A673 (cell line): ENCODE measurements at regions of chr2 and their contacts with region 1.

Region 1: DNA sequence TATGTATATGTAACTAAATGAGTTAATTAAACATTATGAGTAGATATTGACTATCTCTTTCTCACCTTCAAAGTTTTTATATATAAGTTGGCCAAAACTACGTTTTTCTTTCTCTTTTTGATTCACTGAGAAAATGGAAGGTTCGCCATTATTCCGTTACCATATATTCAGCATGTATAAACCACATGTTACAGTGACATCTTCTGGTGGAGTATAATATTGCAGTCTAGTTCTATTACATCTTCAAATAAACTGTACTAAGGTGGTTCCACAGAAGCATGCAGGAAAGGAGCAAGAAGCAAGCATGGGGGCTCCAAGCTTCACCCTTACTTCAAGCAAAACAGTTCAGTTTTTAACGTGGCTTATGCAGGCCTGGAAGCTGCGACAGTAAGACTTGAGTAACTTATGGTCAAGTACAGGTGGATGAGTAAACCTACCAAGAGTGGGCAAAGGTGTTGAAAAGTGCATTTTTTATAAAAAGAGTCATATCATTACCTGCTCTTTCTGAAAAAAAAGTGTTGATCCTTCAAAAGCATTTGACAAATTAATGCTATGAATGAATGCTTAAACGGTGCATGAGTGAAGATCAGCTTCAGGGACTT is 129.8 kb upstream of the RAB6C start:
- DNase-seq: peak; percentile 76
- H3K4me3 ChIP-seq: no peak overlapping the region
- H3K27ac ChIP-seq: no peak overlapping the region
- H3K4me1 ChIP-seq: no peaks in the 10 kb centered on the region
- H3K27me3 ChIP-seq: no peaks in the 10 kb centered on the region
- CTCF ChIP-seq: peak; percentile 75

Region 2: GRCh38 chr2:128756365-128756717 is 1093.3 kb before region 1 on chr2:
- CTCF ChIA-PET with region 1: no interaction called
- POLR2A ChIA-PET with region 1: no interaction called
- intact Hi-C with region 1: loop called (anchors 5 kb)
- DNase-seq: peak; percentile 41
- H3K4me3 ChIP-seq: no peak overlapping the region
- H3K27ac ChIP-seq: no peak overlapping the region
- H3K4me1 ChIP-seq: peaks cover 10% of the 10 kb centered on the region
- H3K27me3 ChIP-seq: no peaks in the 10 kb centered on the region
- CTCF ChIP-seq: no peak

Region 3: DNA sequence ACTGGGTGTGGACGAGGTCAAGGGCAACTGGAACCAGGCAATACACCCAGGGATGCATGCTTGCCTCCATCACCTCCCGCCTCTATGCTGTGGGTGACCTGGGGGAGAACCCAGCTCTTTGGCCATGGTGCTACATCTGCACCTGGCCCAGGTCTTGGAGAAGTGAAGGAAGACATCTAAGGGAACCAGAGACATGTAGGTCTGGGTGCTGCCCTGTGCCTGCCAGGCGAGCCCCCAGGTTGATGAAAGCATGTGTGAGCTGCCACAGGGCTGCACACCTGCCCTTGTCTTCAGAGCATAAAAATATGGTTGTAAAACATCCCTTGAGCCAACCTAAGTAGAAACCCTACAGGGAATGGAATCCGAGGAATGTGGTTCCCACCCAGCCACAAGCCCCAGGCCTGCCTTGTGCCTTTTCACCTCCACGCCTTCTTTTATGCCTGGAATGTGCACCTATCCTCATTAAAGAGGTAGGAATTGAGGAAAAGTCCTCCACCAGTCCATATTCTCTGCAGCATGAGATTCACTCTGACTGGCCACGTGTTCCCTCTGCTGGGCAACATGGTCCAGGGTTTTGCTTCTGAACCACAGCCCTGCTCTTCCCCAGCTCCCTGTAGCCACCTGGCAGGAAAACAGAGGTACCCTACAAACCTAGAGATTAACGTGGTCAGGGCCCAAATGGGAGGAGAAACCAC is 658.3 kb before region 1 on chr2:
- CTCF ChIA-PET with region 1: no interaction called
- POLR2A ChIA-PET with region 1: no interaction called
- intact Hi-C with region 1: loop called (anchors 10 kb)
- DNase-seq: no peak
- H3K4me3 ChIP-seq: no peak overlapping the region
- H3K27ac ChIP-seq: no peak overlapping the region
- H3K4me1 ChIP-seq: no peaks in the 10 kb centered on the region
- H3K27me3 ChIP-seq: peaks cover under 1% of the 10 kb centered on the region
- CTCF ChIP-seq: no peak